GM12878 (cell line): ENCODE measurements at regions of chr11 and their contacts with region 1.

Region 1: DNA sequence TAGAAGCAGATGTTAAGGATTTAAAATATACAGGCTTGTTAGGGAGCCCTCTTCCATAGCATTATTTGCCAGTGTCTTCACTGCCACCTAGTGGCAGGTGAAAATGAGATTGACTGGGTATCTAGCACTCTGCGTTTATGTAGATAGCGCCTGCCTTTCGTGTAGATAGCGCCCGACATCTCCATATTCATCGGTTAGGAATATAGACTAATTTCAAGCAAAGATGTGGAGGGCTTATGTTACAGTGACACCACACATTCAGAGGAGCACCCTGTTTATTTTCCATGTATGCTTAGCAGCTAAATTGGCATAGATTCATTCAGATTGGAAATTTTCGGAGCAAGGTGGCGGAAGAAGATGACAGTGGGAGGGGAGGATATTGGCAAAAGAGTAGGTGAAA is 72.0 kb downstream of the SLC5A12 start:
- DNase-seq: peak; percentile 54
- ATAC-seq: peak; percentile 94
- H3K4me3 ChIP-seq: no peak overlapping the region
- H3K27ac ChIP-seq: no peak overlapping the region
- H3K4me1 ChIP-seq: no peaks in the 10 kb centered on the region
- H3K27me3 ChIP-seq: no peaks in the 10 kb centered on the region
- CTCF ChIP-seq: peak; percentile 72 to 83 (median 75)
- EP300 ChIP-seq: no peak
- POLR2A ChIP-seq: no peak
- RAD21 ChIP-seq: peak; percentile 81

Region 2: DNA sequence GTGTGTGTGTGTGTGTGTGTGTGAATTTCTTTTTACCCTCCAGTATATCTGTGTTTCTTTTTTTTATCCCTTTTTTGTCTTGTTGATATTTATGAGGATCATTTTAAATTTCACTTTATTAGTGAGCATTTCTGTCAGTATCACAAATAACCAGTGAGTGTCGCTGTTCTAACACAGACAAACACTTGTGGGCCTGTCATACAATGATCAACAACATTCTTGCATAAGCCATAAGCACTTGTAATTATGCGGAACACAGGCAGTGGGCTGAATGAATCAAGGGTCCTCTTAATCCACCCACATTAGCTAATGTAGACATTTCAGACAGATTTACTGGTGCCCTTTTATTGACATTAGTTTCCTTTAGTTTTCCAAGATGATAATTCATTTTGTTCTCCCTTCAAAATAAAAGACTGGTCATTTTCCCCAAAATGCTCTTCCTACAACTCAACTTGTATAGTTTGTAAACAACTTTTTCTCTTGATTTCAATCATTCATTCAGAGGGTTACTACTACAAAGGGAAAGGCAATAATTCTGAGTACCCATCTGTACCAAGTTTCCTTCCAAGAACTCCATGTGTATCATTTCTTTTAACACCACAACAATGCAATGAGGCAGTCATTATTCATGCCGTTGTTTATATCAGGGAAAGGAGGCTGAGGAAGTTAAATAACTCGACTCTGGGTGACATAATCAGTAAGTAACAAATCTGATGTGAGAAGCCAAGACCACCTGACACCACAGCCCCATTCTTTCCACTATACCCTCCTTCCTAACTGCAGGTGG is 352.5 kb before region 1 on chr11:
- CTCF ChIA-PET with region 1: interaction called, 22 read pairs
- POLR2A ChIA-PET with region 1: no interaction called
- RAD21 ChIA-PET with region 1: interaction called, 17 read pairs
- SMC1A ChIA-PET with region 1: interaction called, 32 read pairs
- in situ Hi-C with region 1: loop called (anchors 5 kb)
- intact Hi-C with region 1: loop called (anchors 1 kb)
- DNase-seq: no peak
- ATAC-seq: peak; percentile 92
- H3K4me3 ChIP-seq: no peak overlapping the region
- H3K27ac ChIP-seq: no peak overlapping the region
- H3K4me1 ChIP-seq: no peaks in the 10 kb centered on the region
- H3K27me3 ChIP-seq: no peaks in the 10 kb centered on the region
- CTCF ChIP-seq: peak; percentile 56 to 73 (median 67)
- EP300 ChIP-seq: no peak
- POLR2A ChIP-seq: no peak
- RAD21 ChIP-seq: peak; percentile 79

Region 3: GRCh38 chr11:26522912-26523610 is 126.8 kb before region 1 on chr11:
- CTCF ChIA-PET with region 1: interaction called, 7 read pairs
- POLR2A ChIA-PET with region 1: no interaction called
- RAD21 ChIA-PET with region 1: interaction called, 7 read pairs
- SMC1A ChIA-PET with region 1: interaction called, 7 read pairs
- in situ Hi-C with region 1: no loop called
- intact Hi-C with region 1: loop called (anchors 1 kb)
- DNase-seq: no peak
- ATAC-seq: peak; percentile 64
- H3K4me3 ChIP-seq: no peak overlapping the region
- H3K27ac ChIP-seq: no peak overlapping the region
- H3K4me1 ChIP-seq: no peaks in the 10 kb centered on the region
- H3K27me3 ChIP-seq: no peaks in the 10 kb centered on the region
- CTCF ChIP-seq: peak; percentile 30 to 40 (median 32); a peak in 4 of 6 replicates
- EP300 ChIP-seq: no peak
- POLR2A ChIP-seq: no peak
- RAD21 ChIP-seq: peak; percentile 33

Region 4: DNA sequence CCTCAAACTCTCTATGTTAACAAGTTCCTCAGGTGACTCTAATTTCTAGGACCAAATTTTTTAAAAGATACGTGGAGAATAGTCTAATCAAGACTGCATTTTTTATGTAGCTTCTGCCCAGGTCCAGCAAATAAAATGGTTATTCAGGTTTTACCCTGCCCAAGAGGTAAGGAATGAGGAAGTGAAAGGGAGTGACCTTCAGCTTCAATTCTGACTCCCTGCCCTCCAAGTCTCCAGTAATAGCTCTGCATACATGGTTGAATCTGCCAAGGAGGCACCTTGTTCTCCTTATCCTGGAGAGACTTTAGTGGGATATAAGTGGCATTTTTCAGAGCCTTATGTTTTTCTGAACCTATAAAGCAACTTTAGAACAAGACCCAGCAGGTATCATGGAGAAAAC is 93.3 kb before region 1 on chr11:
- CTCF ChIA-PET with region 1: interaction called, 11 read pairs
- POLR2A ChIA-PET with region 1: no interaction called
- RAD21 ChIA-PET with region 1: interaction called, 7 read pairs
- SMC1A ChIA-PET with region 1: interaction called, 27 read pairs
- in situ Hi-C with region 1: no loop called
- intact Hi-C with region 1: loop called (anchors 1 kb)
- DNase-seq: no peak
- ATAC-seq: peak; percentile 85
- H3K4me3 ChIP-seq: no peak overlapping the region
- H3K27ac ChIP-seq: no peak overlapping the region
- H3K4me1 ChIP-seq: no peaks in the 10 kb centered on the region
- H3K27me3 ChIP-seq: no peaks in the 10 kb centered on the region
- CTCF ChIP-seq: no peak
- EP300 ChIP-seq: no peak
- POLR2A ChIP-seq: no peak
- RAD21 ChIP-seq: no peak

Region 5: DNA sequence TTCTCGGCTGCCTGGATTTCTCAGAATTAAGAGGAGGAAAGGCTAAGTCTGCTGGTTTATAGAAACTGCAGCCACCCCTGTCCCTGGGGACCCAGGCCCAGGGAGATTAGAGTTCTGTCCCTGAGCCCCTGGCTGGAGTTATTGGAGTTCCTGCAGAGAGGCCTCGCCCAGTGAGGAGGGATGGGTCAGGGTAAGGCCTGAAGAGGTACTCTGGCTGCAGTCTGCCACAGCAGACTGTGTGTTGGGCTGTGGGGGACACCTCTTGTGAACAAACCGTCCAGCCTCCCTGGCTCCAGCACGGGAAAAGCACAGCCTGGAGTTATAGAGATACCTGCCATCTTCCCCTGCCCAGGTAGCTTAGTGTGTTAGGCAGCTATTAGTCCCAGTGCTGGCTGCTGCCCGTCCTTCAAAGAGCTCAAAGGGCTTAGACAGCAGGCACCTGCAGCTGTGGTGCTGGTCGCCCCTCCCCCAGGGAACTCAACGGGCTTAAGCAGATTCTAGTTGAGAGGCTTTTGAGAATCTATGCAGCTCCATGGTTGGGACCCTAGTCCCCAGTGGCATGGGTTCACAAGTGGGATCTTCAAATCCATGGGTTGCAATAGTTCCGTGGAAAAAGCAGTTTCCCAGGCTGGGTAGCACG is 41.3 kb before region 1 on chr11:
- CTCF ChIA-PET with region 1: interaction called, 9 read pairs
- POLR2A ChIA-PET with region 1: no interaction called
- RAD21 ChIA-PET with region 1: interaction called, 4 read pairs
- SMC1A ChIA-PET with region 1: interaction called, 19 read pairs
- in situ Hi-C with region 1: no loop called
- intact Hi-C with region 1: loop called (anchors 2 kb)
- DNase-seq: no peak
- ATAC-seq: peak; percentile 66
- H3K4me3 ChIP-seq: no peak overlapping the region
- H3K27ac ChIP-seq: peak overlapping the region; percentile 58
- H3K4me1 ChIP-seq: peaks cover 4% of the 10 kb centered on the region; the same call in 1 of the 2 replicates
- H3K27me3 ChIP-seq: no peaks in the 10 kb centered on the region
- CTCF ChIP-seq: no peak
- EP300 ChIP-seq: no peak
- POLR2A ChIP-seq: no peak
- RAD21 ChIP-seq: no peak

Region 6: DNA sequence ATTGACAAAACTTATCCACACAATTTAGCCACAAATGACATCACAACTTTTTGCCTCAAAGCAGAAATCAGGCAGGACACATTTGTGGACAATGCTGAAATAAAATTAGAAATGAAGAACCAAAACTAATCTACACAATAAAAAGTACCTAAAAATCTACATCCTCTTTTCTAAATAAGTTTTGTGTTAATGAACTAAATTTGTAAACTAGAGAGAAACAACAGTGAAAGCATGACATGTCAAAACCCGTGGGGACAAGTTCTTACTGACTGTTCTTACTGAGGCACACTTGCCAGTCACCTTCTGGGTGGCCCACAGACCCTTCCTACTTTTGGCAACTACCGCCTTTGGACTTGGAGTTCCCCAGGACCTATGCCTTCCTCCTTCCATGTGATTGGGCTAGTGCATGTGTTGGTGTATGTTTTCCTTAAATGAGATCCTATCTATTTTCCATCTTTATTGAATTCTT is 17.2 kb before region 1 on chr11:
- CTCF ChIA-PET with region 1: interaction called, 37 read pairs
- POLR2A ChIA-PET with region 1: interaction called, 4 read pairs
- RAD21 ChIA-PET with region 1: interaction called, 3 read pairs
- SMC1A ChIA-PET with region 1: interaction called, 10 read pairs
- in situ Hi-C with region 1: no loop called
- intact Hi-C with region 1: no loop called
- DNase-seq: peak; percentile 62
- ATAC-seq: peak; percentile 96
- H3K4me3 ChIP-seq: no peak overlapping the region
- H3K27ac ChIP-seq: peak overlapping the region; percentile 30; the same call in 1 of the 2 replicates
- H3K4me1 ChIP-seq: peaks cover 4% of the 10 kb centered on the region
- H3K27me3 ChIP-seq: no peaks in the 10 kb centered on the region
- CTCF ChIP-seq: no peak
- EP300 ChIP-seq: peak; percentile 76 to 82; a peak in 3 of 4 replicates
- POLR2A ChIP-seq: no peak
- RAD21 ChIP-seq: no peak

Region 7: DNA sequence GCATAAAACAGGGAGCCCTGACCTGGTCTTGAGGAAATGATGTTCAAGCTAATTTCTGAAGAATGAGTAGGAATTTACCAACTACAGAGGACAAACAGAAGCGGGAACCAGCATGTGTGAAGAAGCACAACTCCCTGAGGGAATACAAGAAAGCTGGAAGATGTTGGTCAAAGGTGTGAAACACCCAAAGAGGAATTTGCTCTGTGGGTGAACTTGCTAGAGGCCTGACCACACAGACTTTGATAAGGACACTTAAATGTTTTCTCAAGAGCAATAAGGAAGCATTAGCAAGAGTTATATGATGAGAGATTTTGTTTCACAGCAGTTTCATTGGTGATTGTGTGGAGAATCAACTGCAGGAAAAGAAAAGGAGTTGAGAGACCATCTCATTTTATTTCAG is 54.4 kb after region 1 on chr11:
- CTCF ChIA-PET with region 1: no interaction called
- POLR2A ChIA-PET with region 1: no interaction called
- RAD21 ChIA-PET with region 1: no interaction called
- SMC1A ChIA-PET with region 1: no interaction called
- in situ Hi-C with region 1: no loop called
- intact Hi-C with region 1: no loop called
- DNase-seq: no peak
- ATAC-seq: no peak
- H3K4me3 ChIP-seq: no peak overlapping the region
- H3K27ac ChIP-seq: no peak overlapping the region
- H3K4me1 ChIP-seq: no peaks in the 10 kb centered on the region
- H3K27me3 ChIP-seq: no peaks in the 10 kb centered on the region
- CTCF ChIP-seq: no peak
- EP300 ChIP-seq: no peak
- POLR2A ChIP-seq: no peak
- RAD21 ChIP-seq: no peak

Region 8: GRCh38 chr11:27158722-27159679 is 509.1 kb after region 1 on chr11:
- CTCF ChIA-PET with region 1: interaction called, 4 read pairs
- POLR2A ChIA-PET with region 1: no interaction called
- RAD21 ChIA-PET with region 1: interaction called, 4 read pairs
- SMC1A ChIA-PET with region 1: interaction called, 9 read pairs
- in situ Hi-C with region 1: no loop called
- intact Hi-C with region 1: loop called (anchors 10 kb)
- DNase-seq: no peak
- ATAC-seq: peak; percentile 82
- H3K4me3 ChIP-seq: no peak overlapping the region
- H3K27ac ChIP-seq: no peak overlapping the region
- H3K4me1 ChIP-seq: no peaks in the 10 kb centered on the region
- H3K27me3 ChIP-seq: no peaks in the 10 kb centered on the region
- CTCF ChIP-seq: peak; percentile 62 to 75 (median 62); a peak in 5 of 6 replicates
- EP300 ChIP-seq: no peak
- POLR2A ChIP-seq: no peak
- RAD21 ChIP-seq: peak; percentile 89